T-cell (primary cell): ENCODE measurements at regions of chr17 and their contacts with region 1.

Region 1: DNA sequence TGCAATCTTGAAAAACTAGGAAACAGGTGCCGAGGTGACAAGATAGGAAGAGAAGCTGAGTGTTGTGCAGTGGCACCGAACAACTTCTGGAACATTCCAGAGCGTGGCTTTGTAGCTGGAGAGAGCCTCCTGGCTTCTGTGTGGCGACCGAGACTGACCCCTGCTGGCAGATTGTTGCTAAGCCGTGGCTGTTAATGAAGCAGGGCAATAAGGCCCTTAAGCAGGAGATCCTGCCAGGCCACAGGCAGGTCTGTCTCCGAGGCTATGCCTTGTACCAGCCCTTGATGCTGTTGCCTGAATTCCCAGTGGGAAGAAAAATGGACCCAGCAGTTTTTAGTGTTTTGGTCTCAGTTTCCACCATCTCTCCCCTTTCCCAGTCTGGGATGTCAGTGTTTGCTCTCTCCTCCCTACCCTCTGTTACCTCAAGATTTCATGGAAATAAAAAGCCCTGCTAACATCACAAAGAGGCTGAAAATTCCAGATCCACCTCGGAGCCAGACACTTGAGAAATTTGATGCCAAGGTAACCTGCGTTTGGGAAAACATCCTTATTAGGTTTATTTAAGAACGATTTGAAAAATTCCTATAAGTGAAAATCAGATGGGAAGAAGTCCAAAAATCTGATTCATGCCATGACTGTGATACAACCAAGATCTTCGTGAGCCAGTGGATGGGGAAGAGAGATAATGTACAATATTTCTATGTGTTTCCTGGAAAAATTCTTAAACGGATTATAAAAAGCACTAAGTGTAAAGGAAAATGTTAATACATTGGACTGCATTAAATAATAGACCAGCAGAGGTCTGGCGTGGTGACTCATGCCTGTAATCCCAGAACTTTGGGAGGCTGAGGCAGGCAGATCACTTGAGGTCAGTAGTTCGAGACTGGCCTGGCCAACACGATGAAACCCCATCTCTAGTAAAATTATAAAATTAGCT is 265.1 kb downstream of the PRKCA start:
- DNase-seq: peak; percentile 38 to 85 (median 72)
- ATAC-seq: peak; percentile 72 to 82 (median 81)
- H3K4me3 ChIP-seq: no peak overlapping the region
- H3K4me3 Mint-ChIP-seq: no peak overlapping the region
- H3K27ac ChIP-seq: no peak overlapping the region
- H3K27ac Mint-ChIP-seq: peak overlapping the region in 1 of 2 donors; percentile 22
- H3K4me1 ChIP-seq: peaks cover 0 to 6% of the 10 kb centered on the region in 2 experiments
- H3K4me1 Mint-ChIP-seq: peaks cover 29 to 42% (median 33%) of the 10 kb centered on the region in 3 donors
- H3K27me3 ChIP-seq: no peaks in the 10 kb centered on the region
- H3K27me3 Mint-ChIP-seq: no peaks in the 10 kb centered on the region

Region 2: GRCh38 chr17:66200685-66201092 is 366.8 kb before region 1 on chr17:
- CTCF ChIA-PET with region 1: interaction called in 1 of 2 experiments, 10 read pairs
- POLR2A ChIA-PET with region 1: no interaction called
- DNase-seq: peak in 29 of 35 experiments; percentile 3 to 72 (median 24)
- ATAC-seq: peak in 3 of 4 experiments; percentile 34 to 52 (median 44)
- H3K4me3 ChIP-seq: no peak overlapping the region
- H3K4me3 Mint-ChIP-seq: peak overlapping the region in 1 of 3 donors; percentile 28
- H3K27ac ChIP-seq: no peak overlapping the region
- H3K27ac Mint-ChIP-seq: peak overlapping the region in 1 of 2 donors; percentile 52
- H3K4me1 ChIP-seq: peaks cover 8 to 12% of the 10 kb centered on the region in 2 experiments
- H3K4me1 Mint-ChIP-seq: peaks cover 19 to 22% (median 19%) of the 10 kb centered on the region in 3 donors
- H3K27me3 ChIP-seq: no peaks in the 10 kb centered on the region
- H3K27me3 Mint-ChIP-seq: no peaks in the 10 kb centered on the region

Region 3: GRCh38 chr17:66255112-66255511 is 312.4 kb before region 1 on chr17:
- CTCF ChIA-PET with region 1: interaction called in 1 of 2 experiments, 22 read pairs
- POLR2A ChIA-PET with region 1: no interaction called
- DNase-seq: peak in 29 of 35 experiments; percentile 3 to 86 (median 26)
- ATAC-seq: peak; percentile 85 to 93 (median 88)
- H3K4me3 ChIP-seq: no peak overlapping the region
- H3K4me3 Mint-ChIP-seq: peak overlapping the region in 2 of 3 donors; percentile 53
- H3K27ac ChIP-seq: peak overlapping the region; percentile 50
- H3K27ac Mint-ChIP-seq: peak overlapping the region; percentile 76 to 93
- H3K4me1 ChIP-seq: peaks cover 4 to 15% of the 10 kb centered on the region in 2 experiments
- H3K4me1 Mint-ChIP-seq: peaks cover 21 to 25% (median 21%) of the 10 kb centered on the region in 3 donors
- H3K27me3 ChIP-seq: no peaks in the 10 kb centered on the region
- H3K27me3 Mint-ChIP-seq: no peaks in the 10 kb centered on the region